GM12878 (cell line): ENCODE measurements at regions of chr17 and their contacts with region 1.

Region 1: DNA sequence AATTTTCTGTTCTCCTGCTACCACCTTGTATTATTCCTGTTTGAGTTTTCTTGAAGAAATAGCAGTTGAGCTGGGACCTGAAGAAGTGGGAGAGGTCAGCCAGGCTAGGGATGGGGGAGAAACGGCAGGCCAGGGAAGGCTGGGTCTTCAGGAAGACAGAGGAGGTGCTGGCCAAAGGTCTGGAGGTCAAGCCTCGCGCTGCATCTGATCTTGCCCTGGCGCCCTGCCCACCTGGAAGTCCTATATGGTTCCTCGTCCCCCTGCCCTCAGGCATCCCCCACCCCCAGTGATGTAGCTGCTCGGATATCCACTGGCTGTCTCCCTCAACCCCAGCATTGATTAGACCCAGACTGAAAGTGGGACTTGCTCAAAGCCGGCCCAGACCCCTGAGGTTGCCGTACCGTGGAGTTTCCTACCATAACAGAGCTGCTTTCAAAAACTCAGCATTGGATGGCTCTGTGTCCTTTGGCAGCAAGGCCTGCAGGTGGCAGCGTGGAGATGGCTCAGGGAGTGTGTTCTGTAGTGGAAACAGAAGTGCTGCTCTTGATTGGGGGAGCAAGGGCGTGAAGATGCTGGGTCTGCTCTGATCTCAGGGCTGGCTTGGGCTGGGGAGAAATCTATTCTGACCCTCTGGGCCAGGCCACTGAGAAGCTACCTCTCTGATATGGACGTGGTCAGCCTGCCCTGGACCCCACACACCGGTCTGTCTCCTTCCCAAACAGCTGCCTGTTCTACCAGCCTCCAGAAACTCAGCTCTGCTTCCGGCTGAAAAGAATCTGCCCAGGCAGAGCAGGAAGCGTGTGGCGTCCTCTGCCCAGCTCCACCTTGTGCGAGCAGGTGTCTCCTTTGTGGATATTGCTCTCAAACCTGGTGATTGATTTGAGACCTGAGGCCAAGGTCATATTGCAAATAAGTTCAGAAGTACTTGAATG is 107.0 kb upstream of the CACNG5 start:
- DNase-seq: no peak
- ATAC-seq: peak; percentile 99
- H3K4me3 ChIP-seq: no peak overlapping the region
- H3K27ac ChIP-seq: no peak overlapping the region
- H3K4me1 ChIP-seq: no peaks in the 10 kb centered on the region
- H3K27me3 ChIP-seq: no peaks in the 10 kb centered on the region; a peak in 2 of 4 replicates
- CTCF ChIP-seq: peak; percentile 72 to 87 (median 80); a peak in 5 of 6 replicates
- EP300 ChIP-seq: no peak
- POLR2A ChIP-seq: no peak
- RAD21 ChIP-seq: peak; percentile 83

Region 2: GRCh38 chr17:66508896-66509843 is 218.7 kb before region 1 on chr17:
- CTCF ChIA-PET with region 1: no interaction called
- POLR2A ChIA-PET with region 1: no interaction called
- RAD21 ChIA-PET with region 1: no interaction called
- SMC1A ChIA-PET with region 1: no interaction called
- in situ Hi-C with region 1: no loop called
- intact Hi-C with region 1: no loop called
- DNase-seq: no peak
- ATAC-seq: no peak
- H3K4me3 ChIP-seq: no peak overlapping the region
- H3K27ac ChIP-seq: no peak overlapping the region
- H3K4me1 ChIP-seq: no peaks in the 10 kb centered on the region
- H3K27me3 ChIP-seq: no peaks in the 10 kb centered on the region
- CTCF ChIP-seq: no peak
- EP300 ChIP-seq: no peak
- POLR2A ChIP-seq: no peak
- RAD21 ChIP-seq: no peak

Region 3: DNA sequence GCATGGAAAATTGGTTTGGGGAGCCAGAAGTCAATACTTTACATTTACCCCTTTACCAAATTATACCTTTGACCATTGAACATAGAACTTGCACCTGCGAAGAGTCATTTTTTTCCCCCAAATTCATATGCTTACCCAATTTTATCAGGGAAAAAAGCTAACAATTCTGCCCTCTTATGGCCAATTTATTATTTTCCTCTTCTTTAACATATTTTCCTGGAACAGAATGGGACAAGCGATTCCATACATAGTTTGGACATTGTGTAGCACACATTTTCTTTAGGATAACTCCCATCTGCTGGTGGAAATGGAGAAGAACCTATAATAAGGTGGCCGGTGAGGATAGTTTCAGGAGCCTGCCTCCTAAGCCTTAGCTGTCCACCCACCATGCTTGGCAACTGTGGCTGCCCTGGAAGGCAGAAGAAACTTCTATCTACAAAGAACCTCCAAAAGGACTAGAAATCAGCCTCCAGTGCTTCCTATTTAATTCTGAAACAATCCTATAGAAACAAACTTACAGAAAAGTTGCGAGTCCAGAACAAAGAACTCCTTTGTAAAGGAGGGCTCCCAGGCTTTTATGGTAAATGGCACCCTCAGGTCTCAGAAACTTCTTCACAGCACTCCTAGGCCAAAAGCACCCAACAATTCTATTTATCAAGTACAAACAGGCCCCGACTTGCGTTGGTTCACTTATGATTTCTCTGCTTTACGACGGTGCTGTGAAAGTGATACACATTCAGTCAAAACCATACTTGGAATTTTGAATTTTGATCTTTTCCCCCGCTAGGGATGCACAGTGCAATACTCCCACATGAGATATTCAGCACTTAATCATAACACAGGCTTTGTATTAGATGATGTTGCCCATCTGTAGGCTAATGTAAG is 172.5 kb after region 1 on chr17:
- CTCF ChIA-PET with region 1: interaction called, 20 read pairs
- POLR2A ChIA-PET with region 1: no interaction called
- RAD21 ChIA-PET with region 1: interaction called, 6 read pairs
- SMC1A ChIA-PET with region 1: interaction called, 9 read pairs
- in situ Hi-C with region 1: no loop called
- intact Hi-C with region 1: no loop called
- DNase-seq: no peak
- ATAC-seq: no peak
- H3K4me3 ChIP-seq: no peak overlapping the region
- H3K27ac ChIP-seq: no peak overlapping the region
- H3K4me1 ChIP-seq: no peaks in the 10 kb centered on the region
- H3K27me3 ChIP-seq: no peaks in the 10 kb centered on the region; a peak in 1 of 4 replicates
- CTCF ChIP-seq: peak in 2 of 3 experiments; percentile 20 to 37; a peak in 2 of 6 replicates
- EP300 ChIP-seq: no peak
- POLR2A ChIP-seq: no peak
- RAD21 ChIP-seq: 0 out of 2 replicates have a peak, but pooled peaks have one; percentile 12

Region 4: GRCh38 chr17:66906321-66907278 is 178.7 kb after region 1 on chr17:
- CTCF ChIA-PET with region 1: interaction called, 16 read pairs
- POLR2A ChIA-PET with region 1: no interaction called
- RAD21 ChIA-PET with region 1: interaction called, 6 read pairs
- SMC1A ChIA-PET with region 1: interaction called, 9 read pairs
- in situ Hi-C with region 1: no loop called
- intact Hi-C with region 1: loop called (anchors 1 kb)
- DNase-seq: peak; percentile 25
- ATAC-seq: peak; percentile 83
- H3K4me3 ChIP-seq: no peak overlapping the region
- H3K27ac ChIP-seq: no peak overlapping the region
- H3K4me1 ChIP-seq: no peaks in the 10 kb centered on the region
- H3K27me3 ChIP-seq: no peaks in the 10 kb centered on the region; a peak in 1 of 4 replicates
- CTCF ChIP-seq: peak; percentile 83 to 92 (median 87)
- EP300 ChIP-seq: no peak
- POLR2A ChIP-seq: no peak
- RAD21 ChIP-seq: peak; percentile 77

Region 5: GRCh38 chr17:67293251-67294203 is 565.6 kb after region 1 on chr17:
- CTCF ChIA-PET with region 1: interaction called, 3 read pairs
- POLR2A ChIA-PET with region 1: interaction called, 5 read pairs
- RAD21 ChIA-PET with region 1: interaction called, 3 read pairs
- SMC1A ChIA-PET with region 1: interaction called, 6 read pairs
- in situ Hi-C with region 1: loop called (anchors 10 kb)
- intact Hi-C with region 1: no loop called
- DNase-seq: peak; percentile 4
- ATAC-seq: peak; percentile 100
- H3K4me3 ChIP-seq: no peak overlapping the region
- H3K27ac ChIP-seq: no peak overlapping the region
- H3K4me1 ChIP-seq: no peaks in the 10 kb centered on the region
- H3K27me3 ChIP-seq: no peaks in the 10 kb centered on the region
- CTCF ChIP-seq: peak; percentile 76 to 93 (median 83)
- EP300 ChIP-seq: no peak
- POLR2A ChIP-seq: no peak
- RAD21 ChIP-seq: peak; percentile 77